IMR-90 (cell line): ENCODE measurements at regions of chr6 and their contacts with region 1.

Region 1: DNA sequence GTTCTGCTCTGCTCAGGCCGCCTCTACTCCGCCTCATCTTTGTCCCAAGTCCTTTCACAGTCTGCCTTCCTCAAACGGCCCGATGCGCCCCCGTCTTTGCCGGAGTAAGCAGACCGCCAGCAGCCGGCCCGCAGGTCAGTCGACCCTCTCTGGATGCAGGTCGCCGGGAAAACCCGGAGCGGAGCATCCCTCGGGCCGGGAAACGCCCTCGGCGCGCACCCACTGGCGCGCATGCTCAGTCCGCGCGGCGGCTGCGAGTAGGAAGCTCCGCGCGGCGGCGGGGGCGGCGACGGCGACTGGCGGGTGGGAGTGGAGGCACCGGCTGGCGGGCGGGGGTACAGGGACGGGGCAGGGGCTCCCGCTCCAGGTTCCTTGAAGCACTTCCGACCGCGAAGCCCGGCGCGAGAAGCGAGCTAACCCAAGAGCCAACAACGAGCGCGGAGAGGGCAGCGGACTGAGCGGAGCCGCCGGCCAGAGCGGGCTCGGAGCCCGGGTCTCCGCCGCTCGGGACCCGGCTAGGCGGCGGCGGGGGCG is at the start of gene LRRC1:
- DNase-seq: peak; percentile 88
- ATAC-seq: peak; percentile 87
- H3K4me3 ChIP-seq: peak within 1 kb of the TSS; percentile 82
- H3K27ac ChIP-seq: peak within 1 kb of the TSS; percentile 79
- H3K4me1 ChIP-seq: peaks cover 7% of the 10 kb centered on the region
- H3K27me3 ChIP-seq: no peaks in the 10 kb centered on the region
- CTCF ChIP-seq: no peak
- POLR2A ChIP-seq: peak; percentile 33; the same call in 1 of the 2 replicates
- RAD21 ChIP-seq: no peak
- total RNA-seq, gene LRRC1: 6.1 and 6.7 TPM in 2 replicates

Region 2: GRCh38 chr6:53530346-53530745 is 264.4 kb before region 1 on chr6:
- CTCF ChIA-PET with region 1: no interaction called
- POLR2A ChIA-PET with region 1: no interaction called
- dilution Hi-C with region 1: no loop called
- in situ Hi-C with region 1: loop called (anchors 10 kb)
- intact Hi-C with region 1: no loop called
- DNase-seq: peak; percentile 43
- ATAC-seq: no peak
- H3K4me3 ChIP-seq: no peak overlapping the region
- H3K27ac ChIP-seq: no peak overlapping the region
- H3K4me1 ChIP-seq: peaks cover 30% of the 10 kb centered on the region
- H3K27me3 ChIP-seq: no peaks in the 10 kb centered on the region
- CTCF ChIP-seq: no peak
- POLR2A ChIP-seq: no peak
- RAD21 ChIP-seq: no peak

Region 3: DNA sequence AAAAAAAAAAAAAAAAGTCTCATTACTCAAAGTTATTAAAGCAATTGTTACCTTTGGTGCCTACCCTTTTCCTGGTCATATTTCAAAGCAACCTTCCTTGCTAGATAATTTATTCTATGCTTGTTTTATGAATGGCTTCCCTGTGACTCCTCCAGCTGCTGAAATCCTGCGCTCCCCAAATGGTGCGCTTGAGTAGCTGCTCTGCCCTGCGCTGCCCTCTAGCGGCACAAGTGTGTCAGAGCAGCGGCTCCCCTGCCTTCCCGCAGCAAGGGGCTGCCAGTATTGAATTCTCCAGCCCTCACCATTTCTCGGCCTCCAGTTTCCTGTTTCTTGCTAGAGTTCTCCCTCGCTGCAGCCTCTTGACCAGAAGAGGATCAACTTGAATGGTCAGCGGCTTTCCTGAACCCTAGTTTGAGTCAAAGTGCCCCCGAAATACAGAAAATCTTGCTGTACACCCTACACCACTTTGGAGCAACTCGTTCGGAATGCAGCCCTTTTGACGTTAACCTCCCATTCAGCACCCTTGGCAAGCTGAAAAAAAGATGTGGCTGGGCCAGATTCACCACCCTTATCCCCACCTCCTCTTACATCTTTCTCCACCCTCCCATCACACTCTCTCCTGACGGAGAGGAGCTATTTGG is 68.9 kb before region 1 on chr6:
- CTCF ChIA-PET with region 1: interaction called, 8 read pairs
- POLR2A ChIA-PET with region 1: no interaction called
- dilution Hi-C with region 1: no loop called
- in situ Hi-C with region 1: no loop called
- intact Hi-C with region 1: loop called (anchors 1 kb)
- DNase-seq: peak; percentile 69
- ATAC-seq: peak; percentile 94
- H3K4me3 ChIP-seq: no peak overlapping the region
- H3K27ac ChIP-seq: no peak overlapping the region
- H3K4me1 ChIP-seq: peaks cover 3% of the 10 kb centered on the region; the same call in 1 of the 2 replicates
- H3K27me3 ChIP-seq: no peaks in the 10 kb centered on the region
- CTCF ChIP-seq: peak; percentile 95
- POLR2A ChIP-seq: no peak
- RAD21 ChIP-seq: peak; percentile 89

Region 4: DNA sequence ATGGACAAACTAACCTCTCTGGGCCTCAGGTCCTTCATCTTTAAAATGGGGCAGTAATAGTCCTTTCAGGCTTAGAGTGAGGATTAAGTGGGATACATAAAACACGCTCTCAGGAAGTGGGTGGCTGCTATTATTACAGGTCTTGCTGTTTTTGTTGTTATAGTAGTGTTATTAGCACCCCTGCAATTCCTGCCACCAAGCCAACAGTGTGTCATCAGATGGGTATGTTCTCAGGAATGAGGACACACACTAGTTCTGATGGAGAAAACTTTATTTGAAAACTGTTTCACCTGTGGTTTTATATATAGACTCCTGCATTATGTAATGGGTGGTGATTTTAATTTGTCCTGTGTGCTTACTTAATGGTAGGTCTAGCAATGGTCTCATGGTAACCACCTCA is 131.7 kb after region 1 on chr6:
- CTCF ChIA-PET with region 1: no interaction called
- POLR2A ChIA-PET with region 1: no interaction called
- dilution Hi-C with region 1: no loop called
- in situ Hi-C with region 1: no loop called
- intact Hi-C with region 1: loop called (anchors 10 kb)
- DNase-seq: peak; percentile 40
- ATAC-seq: no peak
- H3K4me3 ChIP-seq: no peak overlapping the region
- H3K27ac ChIP-seq: no peak overlapping the region
- H3K4me1 ChIP-seq: peaks cover 8% of the 10 kb centered on the region
- H3K27me3 ChIP-seq: no peaks in the 10 kb centered on the region
- CTCF ChIP-seq: no peak
- POLR2A ChIP-seq: no peak
- RAD21 ChIP-seq: no peak